ENCODE measurements at regions of chr17 and their contacts with region 1.

Region 1: DNA sequence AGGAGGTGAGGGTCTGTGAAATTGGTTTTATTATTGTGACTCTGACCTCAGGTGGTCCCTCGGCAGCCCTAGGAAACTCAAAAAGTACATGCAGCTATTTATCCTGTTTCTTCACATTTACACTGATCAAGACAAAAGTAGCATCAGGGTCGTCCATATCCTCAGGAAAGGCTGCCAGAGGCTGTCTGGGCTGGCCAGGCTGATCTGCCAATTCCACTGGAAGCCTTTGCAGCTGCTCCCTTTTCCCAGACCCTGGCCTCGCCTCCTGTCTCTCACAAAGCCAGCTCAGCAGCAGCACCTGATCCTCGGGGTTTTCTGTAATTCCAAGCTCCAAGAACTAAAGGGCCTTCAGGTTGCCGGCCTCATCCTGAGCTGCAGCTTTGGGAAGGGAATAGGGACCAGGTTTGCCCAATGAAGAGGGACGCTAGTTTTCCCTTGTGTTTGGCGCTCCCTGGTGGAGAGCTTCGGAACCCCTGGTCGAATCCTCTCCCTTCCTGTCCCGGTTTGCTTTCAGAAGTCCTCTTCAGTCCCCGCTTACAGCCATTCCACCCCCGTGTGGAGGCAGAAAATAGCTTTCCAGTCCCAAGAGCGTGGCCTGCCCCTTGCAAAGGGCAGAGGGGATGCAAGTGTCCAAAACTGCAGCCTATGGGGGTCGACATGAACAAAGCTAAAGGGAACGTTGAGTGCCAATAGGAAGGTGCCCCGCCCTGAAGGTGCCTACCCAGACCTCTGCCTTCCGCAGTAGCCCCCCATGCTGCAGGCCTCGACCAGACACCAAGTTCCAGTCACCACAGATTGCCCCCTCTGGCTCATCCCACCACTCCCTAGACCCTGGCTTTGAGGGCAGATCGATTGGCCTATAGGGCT is 13.4 kb downstream of the MFSD6L start:
- DNase-seq: peak; percentile 70
- H3K4me3 ChIP-seq: no peak overlapping the region
- H3K27ac ChIP-seq: no peak overlapping the region
- H3K4me1 ChIP-seq: no peaks in the 10 kb centered on the region
- H3K27me3 ChIP-seq: no peaks in the 10 kb centered on the region
- CTCF ChIP-seq: peak; percentile 81 to 90
- POLR2A ChIP-seq: no peak

Region 2: DNA sequence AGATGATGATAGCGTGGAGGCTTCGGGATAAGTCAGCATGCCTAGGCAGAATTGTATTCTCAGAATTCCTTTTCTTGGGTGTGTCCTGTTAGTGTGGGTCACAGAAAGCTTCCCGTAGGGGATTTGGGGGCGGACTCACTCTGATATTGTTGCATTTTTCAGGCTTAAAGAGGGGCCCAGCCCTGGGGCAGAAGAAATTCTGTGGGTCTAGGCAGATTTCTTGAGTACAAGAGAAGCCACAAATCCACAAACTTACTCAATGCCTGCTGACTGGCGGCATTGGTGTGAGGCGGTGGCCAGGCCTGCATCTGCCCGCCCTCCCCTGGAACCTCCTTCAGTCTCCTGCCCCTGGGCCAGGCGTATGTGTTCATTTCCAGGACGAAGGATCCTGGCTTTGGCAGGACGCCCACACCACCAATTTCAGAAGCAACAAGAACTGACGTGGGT is 58.7 kb before region 1 on chr17:
- CTCF ChIA-PET with region 1: no interaction called
- POLR2A ChIA-PET with region 1: no interaction called
- dilution Hi-C with region 1: no loop called
- intact Hi-C with region 1: no loop called
- DNase-seq: no peak
- H3K4me3 ChIP-seq: no peak overlapping the region
- H3K27ac ChIP-seq: no peak overlapping the region
- H3K4me1 ChIP-seq: no peaks in the 10 kb centered on the region
- H3K27me3 ChIP-seq: peaks cover 0 to 4% of the 10 kb centered on the region in 2 experiments
- CTCF ChIP-seq: no peak
- POLR2A ChIP-seq: no peak

Region 3: GRCh38 chr17:8753976-8754440 is 31.8 kb before region 1 on chr17:
- CTCF ChIA-PET with region 1: interaction called, 4 read pairs
- POLR2A ChIA-PET with region 1: no interaction called
- dilution Hi-C with region 1: no loop called
- intact Hi-C with region 1: loop called (anchors 1 kb)
- DNase-seq: peak; percentile 21
- H3K4me3 ChIP-seq: no peak overlapping the region
- H3K27ac ChIP-seq: no peak overlapping the region
- H3K4me1 ChIP-seq: no peaks in the 10 kb centered on the region
- H3K27me3 ChIP-seq: peaks cover 0 to 5% of the 10 kb centered on the region in 2 experiments
- CTCF ChIP-seq: peak; percentile 19 to 20
- POLR2A ChIP-seq: no peak

Region 4: GRCh38 chr17:8798846-8799569 is 13.2 kb after region 1 on chr17 and contains the start of gene MFSD6L:
- CTCF ChIA-PET with region 1: interaction called, 10 read pairs
- POLR2A ChIA-PET with region 1: no interaction called
- dilution Hi-C with region 1: no loop called
- intact Hi-C with region 1: no loop called
- DNase-seq: no peak
- H3K4me3 ChIP-seq: no peak within 1 kb of the TSS
- H3K27ac ChIP-seq: no peak within 1 kb of the TSS
- H3K4me1 ChIP-seq: no peaks in the 10 kb centered on the region
- H3K27me3 ChIP-seq: peaks cover 4 to 5% of the 10 kb centered on the region in 2 experiments
- CTCF ChIP-seq: no peak
- POLR2A ChIP-seq: no peak
- total RNA-seq, gene MFSD6L: not detected in 2 replicates

Region 5: DNA sequence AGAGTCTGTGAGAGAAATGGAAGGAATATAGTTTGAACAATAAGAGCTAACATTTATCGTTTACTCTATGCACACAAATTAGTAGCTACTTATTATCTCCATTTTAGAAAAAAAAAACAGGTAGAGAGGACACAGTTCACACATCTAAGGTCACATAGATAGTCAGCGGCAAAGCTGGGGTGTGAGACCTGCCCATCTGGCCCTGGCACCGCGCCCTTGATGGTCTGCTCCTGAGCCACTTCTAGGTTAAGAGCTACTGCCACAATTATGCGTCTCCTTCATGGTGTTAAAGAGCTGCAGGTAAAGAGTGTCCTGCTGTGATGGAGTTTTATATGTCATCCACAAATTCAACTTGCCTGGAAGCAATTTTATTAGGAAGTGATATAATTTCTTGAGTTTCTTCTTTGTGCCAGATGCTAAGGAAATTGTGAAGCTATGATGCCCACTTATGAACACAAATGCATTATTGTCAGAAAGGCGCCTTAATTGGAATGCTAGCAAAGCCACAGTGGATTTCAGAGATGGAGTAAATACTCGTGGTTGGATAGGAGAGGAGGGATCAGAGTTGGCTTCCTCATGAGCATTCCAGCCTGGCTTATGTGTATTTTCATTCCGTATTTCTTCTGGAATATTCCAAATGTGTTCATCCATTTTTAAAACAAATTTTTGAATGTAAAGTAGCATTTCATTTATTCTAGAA is 34.7 kb after region 1 on chr17:
- CTCF ChIA-PET with region 1: no interaction called
- POLR2A ChIA-PET with region 1: no interaction called
- dilution Hi-C with region 1: no loop called
- intact Hi-C with region 1: no loop called
- DNase-seq: no peak
- H3K4me3 ChIP-seq: no peak overlapping the region
- H3K27ac ChIP-seq: no peak overlapping the region
- H3K4me1 ChIP-seq: no peaks in the 10 kb centered on the region
- H3K27me3 ChIP-seq: peaks cover 2 to 5% of the 10 kb centered on the region in 2 experiments
- CTCF ChIP-seq: no peak
- POLR2A ChIP-seq: no peak